ENCODE measurements at regions of chr16 and their contacts with region 1.

Region 1: GRCh38 chr16:82271636-82272035 is 101.6 kb upstream of the MPHOSPH6 start:
- DNase-seq: no peak

Region 2: DNA sequence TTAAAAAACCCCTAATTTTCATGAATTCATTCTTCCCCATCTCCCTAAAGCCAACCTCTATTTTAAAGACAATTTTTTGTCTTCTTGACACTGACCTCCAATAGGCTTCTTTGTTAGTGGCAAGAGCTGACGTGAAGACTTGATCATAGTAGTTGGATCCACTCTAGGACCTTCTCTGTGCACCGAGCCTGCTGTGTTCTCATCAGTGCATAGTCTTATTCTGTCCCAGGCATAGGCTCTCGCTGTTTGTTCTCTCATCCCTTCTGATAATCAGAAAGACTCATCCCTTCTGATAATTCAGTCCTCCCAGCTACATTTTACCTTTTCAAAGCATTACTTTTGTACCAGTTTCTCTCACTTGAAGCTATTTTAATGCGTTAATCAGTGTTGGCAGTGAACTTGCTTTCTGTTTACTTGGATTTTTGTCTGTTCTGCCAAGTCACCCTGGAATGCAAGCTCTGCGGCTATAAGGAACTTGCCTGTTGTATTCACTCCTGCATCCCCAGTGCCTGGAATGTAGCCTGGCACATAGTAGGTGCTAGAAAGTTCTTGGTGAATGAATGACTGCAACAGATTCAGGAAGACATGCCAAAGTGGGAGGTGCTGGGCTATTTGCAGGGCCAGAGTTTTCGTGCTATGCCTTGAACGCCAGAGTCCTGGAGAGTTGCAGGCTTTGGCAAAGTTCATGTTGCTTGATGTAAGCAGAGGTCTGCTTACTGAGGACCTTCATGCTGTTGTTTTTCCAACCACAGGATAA is 46.0 kb after region 1 on chr16:
- intact Hi-C with region 1: loop called in 1 of 2 experiments (anchors 1 kb)
- DNase-seq: no peak

Region 3: DNA sequence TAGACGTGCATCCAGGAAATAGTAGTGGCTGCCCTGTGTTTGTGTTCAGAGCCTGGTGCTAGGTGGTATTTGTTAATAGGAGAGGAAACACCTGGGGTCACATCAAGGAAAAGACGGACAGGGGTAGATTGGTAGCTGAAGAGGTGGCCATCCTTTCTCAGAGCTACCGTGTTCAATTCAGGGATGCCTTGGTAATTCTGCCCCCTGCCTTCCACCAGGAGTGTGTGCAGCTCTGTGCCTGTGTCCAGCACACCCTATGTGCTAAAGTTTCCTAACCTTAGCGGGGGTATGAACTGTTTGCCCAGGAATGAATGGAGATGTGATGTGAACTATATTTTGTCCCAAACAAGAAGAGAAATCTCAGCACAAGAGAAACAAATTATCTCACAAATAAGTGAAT is 72.5 kb after region 1 on chr16:
- intact Hi-C with region 1: no loop called
- DNase-seq: no peak